Panc1 (cell line): ENCODE measurements at regions of chr1 and their contacts with region 1.

Region 1: GRCh38 chr1:6859415-6860343 is 74.4 kb downstream of the CAMTA1 start:
- DNase-seq: peak; percentile 46
- ATAC-seq: peak; percentile 60; the same call in 1 of the 2 replicates
- H3K4me3 ChIP-seq: no peak overlapping the region
- H3K27ac ChIP-seq: no peak overlapping the region
- H3K4me1 ChIP-seq: no peaks in the 10 kb centered on the region
- H3K27me3 ChIP-seq: no peaks in the 10 kb centered on the region
- CTCF ChIP-seq: no peak

Region 2: DNA sequence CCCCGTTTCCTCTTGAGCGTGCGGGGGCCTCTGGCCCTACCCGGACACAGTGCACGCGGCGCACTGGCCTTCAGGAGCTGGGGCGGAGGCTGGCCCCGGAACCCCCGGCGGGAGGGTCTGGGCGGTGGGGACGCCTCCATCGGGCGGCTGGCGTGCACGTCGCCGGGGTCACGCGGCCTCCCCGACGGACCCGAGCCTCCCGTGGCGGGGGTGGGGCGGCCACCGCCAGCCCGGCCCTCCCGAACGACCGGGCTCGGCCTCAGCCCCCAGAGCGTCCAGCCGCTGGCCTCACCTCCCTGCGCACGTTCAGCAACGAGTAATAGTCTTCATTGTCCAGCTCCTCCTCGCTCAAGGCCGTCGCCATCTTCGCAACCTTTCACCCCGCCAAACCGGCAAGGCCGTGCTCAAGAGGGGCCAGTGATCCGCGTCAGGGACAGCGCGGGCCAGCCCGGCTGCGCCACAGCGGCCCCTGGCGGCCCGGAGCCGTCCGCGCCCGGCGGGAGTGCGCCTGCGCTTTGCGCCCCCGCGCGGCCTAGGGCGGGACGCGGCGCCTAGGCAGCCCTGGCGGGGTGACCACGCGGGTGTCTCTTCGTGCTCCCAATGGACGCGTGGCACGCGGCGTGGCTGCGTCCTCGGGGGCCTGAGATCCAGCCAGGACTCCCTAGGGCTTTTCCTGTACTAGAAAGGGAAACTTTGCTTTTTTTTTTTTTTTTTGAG is 158.1 kb before region 1 on chr1 and contains the start of gene DNAJC11:
- CTCF ChIA-PET with region 1: no interaction called
- POLR2A ChIA-PET with region 1: no interaction called
- in situ Hi-C with region 1: no loop called
- intact Hi-C with region 1: no loop called
- DNase-seq: peak; percentile 33
- ATAC-seq: peak; percentile 98
- H3K4me3 ChIP-seq: peak within 1 kb of the TSS; percentile 94 to 98
- H3K27ac ChIP-seq: peak within 1 kb of the TSS; percentile 93
- H3K4me1 ChIP-seq: peaks cover 11% of the 10 kb centered on the region
- H3K27me3 ChIP-seq: no peaks in the 10 kb centered on the region
- CTCF ChIP-seq: peak; percentile 100
- total RNA-seq, gene DNAJC11: 93.6 TPM

Region 3: GRCh38 chr1:6800745-6801144 is 58.9 kb before region 1 on chr1:
- CTCF ChIA-PET with region 1: no interaction called
- POLR2A ChIA-PET with region 1: no interaction called
- in situ Hi-C with region 1: no loop called
- intact Hi-C with region 1: loop called (anchors 10 kb)
- DNase-seq: no peak
- ATAC-seq: no peak
- H3K4me3 ChIP-seq: no peak overlapping the region
- H3K27ac ChIP-seq: no peak overlapping the region
- H3K4me1 ChIP-seq: peaks cover 10% of the 10 kb centered on the region
- H3K27me3 ChIP-seq: no peaks in the 10 kb centered on the region
- CTCF ChIP-seq: no peak